ENCODE measurements at regions of chr5 and their contacts with region 1.

Region 1: GRCh38 chr5:38441453-38442246 is 114.8 kb downstream of the LIFR start:
- DNase-seq: peak; percentile 90
- H3K27ac ChIP-seq: no peak overlapping the region
- CTCF ChIP-seq: peak; percentile 98

Region 2: DNA sequence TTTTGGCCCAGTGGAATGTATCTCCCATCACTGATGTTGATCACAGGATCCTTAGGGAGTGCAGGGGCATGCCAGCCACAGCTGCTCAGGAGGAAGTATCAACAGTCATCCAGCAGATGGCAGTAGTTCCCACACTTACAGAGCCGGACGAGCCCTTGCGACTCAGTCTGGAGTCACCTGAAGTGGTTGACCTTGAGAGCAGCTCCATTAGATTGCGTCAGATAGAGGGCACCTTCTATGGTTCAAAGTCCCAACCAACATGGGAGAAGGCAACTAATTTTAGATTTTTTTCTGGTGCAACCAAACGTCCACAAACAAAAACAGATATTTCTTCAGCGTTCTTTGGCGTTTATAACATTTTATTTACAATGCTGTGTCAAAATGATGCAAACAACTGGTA is 58.8 kb before region 1 on chr5:
- CTCF ChIA-PET with region 1: interaction called, 12 read pairs
- POLR2A ChIA-PET with region 1: no interaction called
- DNase-seq: peak; percentile 82
- H3K27ac ChIP-seq: no peak overlapping the region
- CTCF ChIP-seq: peak; percentile 82

Region 3: DNA sequence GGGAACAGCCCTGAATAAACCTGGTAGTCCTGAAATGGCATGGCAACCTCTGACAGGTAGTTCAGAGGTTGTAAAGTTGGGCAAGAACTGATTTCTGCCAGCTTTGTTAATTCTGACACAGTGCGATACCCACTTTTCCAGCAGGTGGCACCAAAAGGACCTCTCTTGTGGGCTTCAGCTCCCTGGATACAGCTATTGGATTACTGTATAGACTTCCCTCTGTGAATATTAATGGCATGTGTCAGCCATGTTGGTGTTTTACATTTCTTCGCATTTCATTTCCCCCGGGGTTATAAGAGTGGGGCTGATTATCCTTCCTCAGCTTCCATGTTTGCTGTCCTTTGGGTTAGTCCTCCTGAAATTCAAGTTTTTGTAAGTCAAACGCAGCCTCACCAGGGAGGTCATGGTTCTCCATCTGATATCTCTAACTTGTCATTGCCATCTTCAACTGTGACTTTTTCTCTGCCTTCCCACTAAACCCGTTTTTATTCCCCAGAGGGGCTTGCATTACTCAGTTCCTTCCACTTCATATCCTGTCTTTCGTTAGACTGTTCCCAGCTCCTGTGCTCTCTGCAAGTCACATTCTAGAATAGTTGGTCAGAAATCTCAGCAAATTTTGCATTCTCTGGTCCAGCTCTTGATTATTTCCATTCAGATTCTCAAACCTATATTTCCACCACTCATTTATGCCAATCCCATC is 20.8 kb before region 1 on chr5:
- CTCF ChIA-PET with region 1: interaction called, 24 read pairs
- POLR2A ChIA-PET with region 1: no interaction called
- DNase-seq: peak; percentile 71
- H3K27ac ChIP-seq: no peak overlapping the region
- CTCF ChIP-seq: peak; percentile 85

Region 4: GRCh38 chr5:38651806-38652205 is 210.2 kb after region 1 on chr5:
- CTCF ChIA-PET with region 1: no interaction called
- POLR2A ChIA-PET with region 1: no interaction called
- DNase-seq: no peak
- H3K27ac ChIP-seq: no peak overlapping the region
- CTCF ChIP-seq: no peak

Region 5: DNA sequence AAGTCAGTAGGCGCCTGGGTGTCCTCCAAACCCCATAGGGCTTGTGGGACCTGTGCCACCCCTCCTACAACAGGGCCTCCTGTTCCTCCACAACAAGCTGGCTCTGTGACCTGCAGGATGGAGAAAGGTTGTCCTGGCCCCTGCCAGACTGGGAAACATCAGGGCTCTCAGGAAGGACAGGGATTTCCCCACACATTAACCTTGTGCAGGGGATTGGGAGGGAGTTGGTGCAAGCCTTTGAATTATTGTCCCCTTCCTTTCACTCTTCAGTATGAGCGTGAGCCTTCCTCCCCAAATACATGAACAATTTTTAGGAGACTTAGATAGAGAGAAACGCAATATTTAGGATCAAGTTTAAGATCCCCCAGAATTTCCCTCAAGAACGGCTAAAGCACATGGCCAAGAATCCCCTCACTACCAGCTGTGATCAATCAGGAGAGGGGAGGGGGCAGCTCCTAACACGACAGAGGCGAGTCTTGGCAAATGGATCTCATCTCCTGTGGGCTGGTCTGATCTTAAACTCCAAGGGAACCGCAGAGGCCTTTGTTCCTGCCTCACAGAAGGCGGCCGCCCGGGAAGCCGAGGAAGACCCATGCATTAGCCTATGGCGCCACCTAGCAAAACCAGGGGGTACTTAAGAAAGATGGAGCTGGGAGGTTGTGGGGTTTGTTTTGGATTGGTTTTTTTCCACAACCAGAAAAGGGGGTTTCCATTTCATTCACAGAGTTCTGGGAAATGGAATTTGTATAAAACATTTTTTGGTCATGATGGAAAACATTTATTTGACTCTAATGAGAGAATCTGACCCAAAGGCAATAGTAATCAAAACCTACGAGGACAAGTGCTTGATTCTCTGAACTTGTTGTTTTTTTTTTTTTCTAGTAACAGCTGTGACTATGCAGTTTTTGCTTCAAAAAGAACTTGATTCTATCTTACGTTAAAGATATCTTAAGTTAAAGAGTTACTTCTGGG is 368.0 kb after region 1 on chr5:
- CTCF ChIA-PET with region 1: interaction called, 42 read pairs
- POLR2A ChIA-PET with region 1: no interaction called
- DNase-seq: peak; percentile 87
- H3K27ac ChIP-seq: no peak overlapping the region
- CTCF ChIP-seq: peak; percentile 86

Region 6: GRCh38 chr5:38816083-38817030 is 374.7 kb after region 1 on chr5:
- CTCF ChIA-PET with region 1: interaction called, 10 read pairs
- POLR2A ChIA-PET with region 1: no interaction called
- DNase-seq: peak; percentile 47
- H3K27ac ChIP-seq: peak overlapping the region; percentile 59
- CTCF ChIP-seq: no peak

Measured in RWPE1 (cell line).